Panc1 (cell line): ENCODE measurements at regions of chr20 and their contacts with region 1.

Region 1: GRCh38 chr20:5529331-5530148 is 212.8 kb upstream of the PROKR2 start:
- DNase-seq: peak; percentile 43
- ATAC-seq: peak; percentile 97
- H3K4me3 ChIP-seq: peak overlapping the region in 1 of 2 experiments; percentile 33; a peak in 2 of 4 replicates
- H3K27ac ChIP-seq: no peak overlapping the region
- H3K4me1 ChIP-seq: no peaks in the 10 kb centered on the region
- H3K27me3 ChIP-seq: no peaks in the 10 kb centered on the region
- CTCF ChIP-seq: peak; percentile 92

Region 2: GRCh38 chr20:5211803-5212714 is 317.5 kb before region 1 on chr20:
- CTCF ChIA-PET with region 1: interaction called, 11 read pairs
- POLR2A ChIA-PET with region 1: no interaction called
- in situ Hi-C with region 1: no loop called
- intact Hi-C with region 1: no loop called
- DNase-seq: no peak
- ATAC-seq: no peak
- H3K4me3 ChIP-seq: no peak overlapping the region
- H3K27ac ChIP-seq: no peak overlapping the region
- H3K4me1 ChIP-seq: no peaks in the 10 kb centered on the region
- H3K27me3 ChIP-seq: no peaks in the 10 kb centered on the region
- CTCF ChIP-seq: no peak

Region 3: DNA sequence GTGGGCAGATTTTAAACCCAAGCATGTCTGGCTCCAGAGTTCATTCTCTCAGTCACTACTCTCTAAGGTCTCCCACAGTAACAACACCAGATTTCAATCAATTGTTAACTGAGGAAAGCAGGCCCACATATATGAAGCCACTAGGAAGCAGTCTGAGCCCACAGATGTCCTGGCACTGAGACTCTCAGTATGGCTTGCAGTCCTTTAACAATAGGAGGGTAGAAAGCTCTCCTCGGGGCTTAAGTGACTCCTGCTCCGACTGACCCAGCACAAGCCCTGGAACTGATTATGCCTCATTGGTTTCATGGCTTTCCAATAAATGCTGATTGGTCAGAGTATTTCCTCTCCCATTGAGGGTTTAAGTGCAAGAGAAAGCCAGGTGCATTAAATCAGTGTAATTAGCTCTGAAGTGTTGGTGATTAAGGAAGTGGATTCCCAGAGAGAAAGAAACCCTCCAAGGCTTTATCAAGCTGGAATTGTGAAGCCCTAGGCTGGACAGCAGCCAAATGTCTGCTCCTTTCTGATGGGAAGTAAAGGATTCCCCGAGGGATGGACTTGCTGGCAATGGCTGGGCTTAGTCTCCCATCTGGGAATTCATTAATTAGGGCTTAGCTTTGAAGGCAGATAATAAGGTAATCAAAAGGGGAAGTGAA is 136.2 kb before region 1 on chr20:
- CTCF ChIA-PET with region 1: no interaction called
- POLR2A ChIA-PET with region 1: no interaction called
- in situ Hi-C with region 1: no loop called
- intact Hi-C with region 1: no loop called
- DNase-seq: no peak
- ATAC-seq: no peak
- H3K4me3 ChIP-seq: no peak overlapping the region
- H3K27ac ChIP-seq: no peak overlapping the region
- H3K4me1 ChIP-seq: no peaks in the 10 kb centered on the region
- H3K27me3 ChIP-seq: peaks cover 10% of the 10 kb centered on the region
- CTCF ChIP-seq: no peak

Region 4: DNA sequence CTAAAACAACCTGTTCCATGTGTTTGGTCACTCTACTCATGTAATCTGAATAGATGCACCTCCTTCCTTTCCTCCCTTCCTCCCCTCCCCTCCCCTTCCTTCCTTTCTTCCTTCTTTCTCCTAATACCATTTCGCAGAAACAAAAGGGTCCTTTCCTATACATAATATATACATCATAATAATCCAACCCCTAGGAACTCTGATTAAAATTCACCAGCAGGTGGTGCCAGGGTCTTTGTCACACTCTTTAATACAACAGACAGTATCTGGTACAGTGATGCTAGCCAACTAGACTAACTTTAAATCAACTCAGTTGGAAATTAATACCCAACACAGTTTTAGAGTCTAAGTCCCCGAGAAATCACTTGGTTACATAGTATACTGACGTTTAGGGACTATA is 39.5 kb after region 1 on chr20:
- CTCF ChIA-PET with region 1: no interaction called
- POLR2A ChIA-PET with region 1: no interaction called
- in situ Hi-C with region 1: no loop called
- intact Hi-C with region 1: no loop called
- DNase-seq: peak; percentile 22
- ATAC-seq: peak; percentile 92
- H3K4me3 ChIP-seq: no peak overlapping the region
- H3K27ac ChIP-seq: no peak overlapping the region
- H3K4me1 ChIP-seq: no peaks in the 10 kb centered on the region
- H3K27me3 ChIP-seq: no peaks in the 10 kb centered on the region
- CTCF ChIP-seq: peak; percentile 68; the same call in 1 of the 2 replicates

Region 5: DNA sequence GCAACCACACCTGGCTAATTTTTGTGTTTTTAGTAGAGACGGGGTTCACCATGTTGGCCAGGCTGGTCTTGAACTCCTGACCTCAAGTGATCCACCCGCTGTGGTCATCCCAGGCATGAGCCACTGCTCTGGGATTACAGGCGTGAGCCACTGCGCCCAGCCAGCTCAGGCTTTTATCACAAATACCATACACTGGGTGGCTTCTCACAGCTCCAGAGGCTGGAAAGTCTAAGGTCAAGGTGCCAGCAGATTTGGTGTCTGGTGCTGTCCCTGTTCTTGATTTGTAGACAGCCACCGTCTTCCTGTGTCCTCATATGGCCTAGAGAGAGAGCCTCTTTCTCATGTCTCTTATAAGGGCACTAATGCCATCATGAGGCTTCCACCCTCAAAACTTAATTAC is 246.5 kb after region 1 on chr20:
- CTCF ChIA-PET with region 1: no interaction called
- POLR2A ChIA-PET with region 1: no interaction called
- in situ Hi-C with region 1: no loop called
- intact Hi-C with region 1: no loop called
- DNase-seq: no peak
- ATAC-seq: no peak
- H3K4me3 ChIP-seq: no peak overlapping the region
- H3K27ac ChIP-seq: no peak overlapping the region
- H3K4me1 ChIP-seq: no peaks in the 10 kb centered on the region
- H3K27me3 ChIP-seq: no peaks in the 10 kb centered on the region
- CTCF ChIP-seq: no peak

Region 6: GRCh38 chr20:5788385-5788895 is 258.9 kb after region 1 on chr20:
- CTCF ChIA-PET with region 1: interaction called, 6 read pairs
- POLR2A ChIA-PET with region 1: no interaction called
- in situ Hi-C with region 1: no loop called
- intact Hi-C with region 1: loop called (anchors 1 kb)
- DNase-seq: peak; percentile 72
- ATAC-seq: peak; percentile 96
- H3K4me3 ChIP-seq: no peak overlapping the region
- H3K27ac ChIP-seq: no peak overlapping the region
- H3K4me1 ChIP-seq: no peaks in the 10 kb centered on the region
- H3K27me3 ChIP-seq: no peaks in the 10 kb centered on the region
- CTCF ChIP-seq: peak; percentile 89

Region 7: DNA sequence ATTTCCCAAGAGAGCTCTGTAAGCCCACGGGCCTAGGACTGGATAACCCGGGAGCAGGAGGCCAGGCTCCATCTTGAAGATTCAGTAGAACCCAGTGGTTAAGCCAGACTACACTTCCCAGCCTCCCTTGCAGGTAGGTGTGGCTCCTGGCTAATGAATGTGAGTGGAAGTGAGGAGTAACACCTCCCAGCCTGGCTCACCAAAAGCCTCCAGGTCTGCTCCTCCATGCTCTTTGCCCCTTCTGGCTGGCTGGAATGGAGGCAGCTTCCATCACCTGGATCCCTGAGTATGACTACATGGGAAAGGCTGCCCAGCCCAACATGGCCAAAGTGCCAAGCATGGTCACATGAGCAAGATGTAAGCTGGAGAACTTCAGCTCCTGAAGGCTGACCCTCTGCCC is 514.6 kb after region 1 on chr20:
- CTCF ChIA-PET with region 1: interaction called, 10 read pairs
- POLR2A ChIA-PET with region 1: no interaction called
- in situ Hi-C with region 1: no loop called
- intact Hi-C with region 1: no loop called
- DNase-seq: no peak
- ATAC-seq: peak; percentile 54; the same call in 1 of the 2 replicates
- H3K4me3 ChIP-seq: no peak overlapping the region
- H3K27ac ChIP-seq: no peak overlapping the region
- H3K4me1 ChIP-seq: no peaks in the 10 kb centered on the region
- H3K27me3 ChIP-seq: no peaks in the 10 kb centered on the region
- CTCF ChIP-seq: no peak

Region 8: DNA sequence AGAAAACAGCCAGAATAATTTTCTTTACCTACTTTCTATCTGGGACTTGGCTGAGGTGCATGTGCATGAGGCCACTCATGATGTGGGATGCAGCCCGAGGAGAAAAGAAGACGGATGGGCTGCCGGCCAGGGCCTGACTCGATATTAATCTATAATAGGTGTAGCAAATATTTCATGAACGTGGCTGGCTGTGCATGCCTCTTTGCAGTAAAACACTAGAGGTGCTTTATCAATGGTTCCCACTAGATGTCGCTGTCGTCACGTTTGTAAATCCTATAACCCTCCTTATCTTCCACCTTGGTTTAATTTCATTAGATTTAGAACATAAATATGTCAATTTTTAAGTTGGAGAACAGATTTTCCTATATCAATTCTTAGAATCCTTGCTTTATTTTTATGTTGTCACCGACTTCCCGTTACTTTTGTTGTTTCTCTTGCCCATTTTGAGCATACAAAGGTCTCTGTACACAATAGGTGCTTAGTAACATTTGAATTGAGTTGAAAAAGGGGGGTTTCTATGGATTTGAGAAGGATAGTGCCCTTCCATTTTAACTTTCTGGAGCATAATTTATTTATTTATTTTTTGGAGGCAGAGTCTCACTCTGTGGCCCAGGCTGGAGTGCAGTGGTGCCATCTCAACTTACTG is 612.9 kb after region 1 on chr20:
- CTCF ChIA-PET with region 1: no interaction called
- POLR2A ChIA-PET with region 1: no interaction called
- in situ Hi-C with region 1: no loop called
- intact Hi-C with region 1: loop called (anchors 5 kb)
- DNase-seq: peak; percentile 33
- ATAC-seq: peak; percentile 85
- H3K4me3 ChIP-seq: no peak overlapping the region
- H3K27ac ChIP-seq: no peak overlapping the region
- H3K4me1 ChIP-seq: no peaks in the 10 kb centered on the region
- H3K27me3 ChIP-seq: no peaks in the 10 kb centered on the region
- CTCF ChIP-seq: peak; percentile 86